BJ (cell line): ENCODE measurements at regions of chr6 and their contacts with region 1.

Region 1: DNA sequence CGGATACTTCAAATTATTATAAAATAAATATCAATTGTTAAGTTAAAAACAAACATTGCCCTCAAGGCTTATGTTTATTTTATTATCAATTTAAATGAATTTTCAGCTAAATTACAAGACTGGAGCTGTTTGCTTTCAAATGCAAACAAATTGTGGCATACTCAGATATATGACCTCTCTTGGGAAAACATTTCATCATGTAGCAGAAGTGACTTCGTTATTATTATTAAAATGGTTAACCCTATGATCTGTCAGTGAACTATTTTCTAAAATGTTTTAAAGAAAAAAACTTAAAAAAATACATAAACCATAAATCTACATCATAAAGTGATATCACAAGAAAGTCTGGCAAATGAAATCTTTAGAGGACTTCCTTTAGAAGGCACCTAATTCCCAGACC is 72.5 kb downstream of the MAN1A1 start:
- DNase-seq: no peak
- H3K4me3 ChIP-seq: no peak overlapping the region
- H3K27me3 ChIP-seq: no peaks in the 10 kb centered on the region
- CTCF ChIP-seq: no peak

Region 2: DNA sequence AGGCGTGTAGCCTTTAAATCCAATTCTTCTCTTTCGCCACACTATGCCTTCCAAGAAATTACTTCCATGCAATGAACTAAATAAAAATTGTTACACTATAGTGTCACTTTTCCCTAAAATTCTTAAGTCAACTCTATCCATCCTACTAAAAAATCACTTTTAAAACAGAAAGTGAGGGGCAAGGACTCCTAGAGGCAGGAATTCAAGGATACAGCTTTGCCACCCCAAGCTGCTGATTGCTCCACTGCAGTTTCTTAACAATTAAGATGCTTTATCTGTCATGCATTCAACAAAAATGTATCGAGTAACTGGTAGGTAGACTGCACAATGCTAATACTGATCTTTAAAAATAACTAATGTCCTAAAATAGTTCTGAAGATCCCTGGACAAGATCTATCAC is 346.4 kb before region 1 on chr6:
- CTCF ChIA-PET with region 1: no interaction called
- POLR2A ChIA-PET with region 1: no interaction called
- DNase-seq: no peak
- H3K4me3 ChIP-seq: no peak overlapping the region
- H3K27me3 ChIP-seq: no peaks in the 10 kb centered on the region
- CTCF ChIP-seq: no peak

Region 3: DNA sequence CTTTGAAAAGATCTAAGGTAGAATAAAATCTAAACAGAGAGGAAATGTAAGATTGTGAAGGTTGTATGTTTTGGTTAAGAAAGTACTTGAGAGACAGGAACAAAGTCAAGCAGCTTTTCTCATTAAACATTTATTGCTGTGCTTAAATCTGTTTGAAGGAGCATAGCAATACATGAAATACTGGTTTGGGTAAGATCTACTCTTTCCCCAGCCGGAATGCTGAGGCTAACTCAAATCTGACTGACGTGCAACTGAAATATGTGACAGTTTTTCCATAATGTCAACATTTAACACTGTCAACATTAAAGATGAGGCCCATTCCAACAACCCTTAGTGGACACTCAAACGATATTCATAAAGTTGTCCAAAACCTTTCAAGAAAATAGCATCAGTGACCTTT is 12.6 kb after region 1 on chr6:
- CTCF ChIA-PET with region 1: no interaction called
- POLR2A ChIA-PET with region 1: no interaction called
- DNase-seq: no peak
- H3K4me3 ChIP-seq: no peak overlapping the region
- H3K27me3 ChIP-seq: no peaks in the 10 kb centered on the region
- CTCF ChIP-seq: no peak

Region 4: GRCh38 chr6:119299694-119300093 is 22.6 kb after region 1 on chr6:
- CTCF ChIA-PET with region 1: no interaction called
- POLR2A ChIA-PET with region 1: interaction called, 12 read pairs
- DNase-seq: no peak
- H3K4me3 ChIP-seq: no peak overlapping the region
- H3K27me3 ChIP-seq: no peaks in the 10 kb centered on the region
- CTCF ChIP-seq: no peak

Region 5: DNA sequence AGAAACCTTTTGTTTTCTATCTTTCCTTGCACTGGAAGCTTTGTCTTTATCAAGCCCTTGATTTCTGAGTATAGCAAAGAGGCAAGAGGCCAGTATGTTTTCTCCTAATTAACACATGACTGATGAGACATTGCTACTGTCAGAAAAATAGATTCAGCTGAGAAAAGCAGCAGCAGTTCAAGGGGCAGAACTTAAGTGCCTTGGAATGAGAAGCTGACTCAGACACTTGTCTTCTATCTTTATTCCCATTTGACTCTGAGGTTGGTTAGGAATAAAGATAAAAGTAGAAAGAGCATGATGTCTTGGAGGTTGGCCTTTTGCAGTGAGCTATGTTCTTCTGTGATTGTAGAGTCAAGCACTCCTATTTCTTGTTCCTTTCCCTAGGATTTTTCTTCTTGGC is 151.6 kb after region 1 on chr6:
- CTCF ChIA-PET with region 1: no interaction called
- POLR2A ChIA-PET with region 1: no interaction called
- DNase-seq: no peak
- H3K4me3 ChIP-seq: no peak overlapping the region
- H3K27me3 ChIP-seq: no peaks in the 10 kb centered on the region
- CTCF ChIP-seq: no peak